Activated CD4-positive, alpha-beta T cell treated with anti-CD3 and anti-CD28 coated beads for 36 hours (primary cell): ENCODE measurements at regions of chr5 and their contacts with region 1.

Region 1: GRCh38 chr5:79666758-79667157 is 22.9 kb upstream of the CMYA5 start:
- DNase-seq: no peak
- ATAC-seq: no peak
- H3K4me3 Mint-ChIP-seq: no peak overlapping the region
- H3K27ac Mint-ChIP-seq: no peak overlapping the region
- H3K4me1 Mint-ChIP-seq: peaks cover 15% of the 10 kb centered on the region
- H3K27me3 Mint-ChIP-seq: no peaks in the 10 kb centered on the region

Region 2: DNA sequence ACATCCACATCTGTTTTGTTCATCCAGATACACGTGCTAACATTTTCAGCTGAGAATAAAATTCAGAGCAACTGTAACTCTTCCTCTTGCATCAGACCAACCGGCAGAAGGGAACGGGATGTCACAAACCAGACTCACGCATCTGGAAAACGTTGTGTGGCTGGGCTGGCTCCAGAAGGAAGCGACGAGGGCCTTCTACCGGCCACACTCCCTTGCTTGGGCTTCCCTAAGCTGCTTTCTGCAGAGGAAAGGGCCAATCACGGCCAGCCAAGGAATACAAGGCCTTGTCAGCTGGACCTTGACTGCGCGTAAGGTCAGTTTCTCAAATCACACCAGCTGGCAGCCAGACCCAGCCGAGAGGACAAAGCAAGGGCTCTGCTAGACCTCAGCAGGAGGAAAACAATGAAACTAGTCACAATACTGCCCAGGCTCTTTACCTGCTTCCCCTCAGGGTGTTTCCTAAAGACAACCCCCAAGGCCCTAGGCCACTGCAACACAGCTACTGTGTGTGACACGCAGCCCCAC is 474.5 kb after region 1 on chr5:
- CTCF ChIA-PET with region 1: no interaction called
- POLR2A ChIA-PET with region 1: interaction called, 10 read pairs
- intact Hi-C with region 1: no loop called
- DNase-seq: no peak
- ATAC-seq: no peak
- H3K4me3 Mint-ChIP-seq: peak overlapping the region; percentile 12
- H3K27ac Mint-ChIP-seq: peak overlapping the region; percentile 94
- H3K4me1 Mint-ChIP-seq: peaks cover 80% of the 10 kb centered on the region
- H3K27me3 Mint-ChIP-seq: no peaks in the 10 kb centered on the region